H1 (cell line): ENCODE measurements at regions of chr1 and their contacts with region 1.

Region 1: DNA sequence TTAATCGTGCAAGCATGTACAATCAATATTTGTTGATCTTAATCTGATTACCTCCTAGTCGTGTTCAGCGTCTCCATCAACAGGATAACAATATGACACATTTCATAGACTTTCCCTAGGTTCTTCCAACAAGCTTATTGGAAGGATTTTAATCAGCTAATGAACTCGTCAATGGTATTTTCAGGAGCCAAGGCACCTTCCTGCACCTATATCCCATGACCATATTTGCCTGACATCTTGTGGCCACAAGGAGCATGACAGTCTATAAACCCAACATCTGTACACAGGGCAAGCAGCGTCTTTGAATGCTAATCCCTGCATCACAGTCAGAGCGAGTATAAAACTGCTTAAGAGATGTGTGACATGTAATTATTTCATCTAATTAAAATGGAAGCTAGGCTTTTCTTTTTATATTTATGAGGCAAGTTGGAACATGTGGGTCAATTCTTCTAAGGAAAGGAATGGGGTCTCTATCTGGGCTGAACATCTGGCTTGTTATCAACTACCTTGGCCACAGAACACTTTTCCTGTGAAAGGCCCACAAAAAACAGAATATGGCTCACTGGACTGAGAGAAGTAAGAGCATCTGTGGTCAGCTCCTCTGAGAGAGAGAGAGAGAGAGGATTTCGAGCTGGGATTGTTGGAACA is 388.8 kb downstream of the NTNG1 start:
- DNase-seq: no peak
- H3K4me3 ChIP-seq: no peak overlapping the region
- H3K27ac ChIP-seq: no peak overlapping the region
- H3K4me1 ChIP-seq: peaks cover 0 to 3% (median under 1%) of the 10 kb centered on the region in 4 experiments; a peak in 2 of 7 replicates
- H3K27me3 ChIP-seq: no peaks in the 10 kb centered on the region
- CTCF ChIP-seq: peak; percentile 43 to 89 (median 84)
- EP300 ChIP-seq: no peak
- POLR2A ChIP-seq: no peak
- RAD21 ChIP-seq: peak; percentile 94

Region 2: DNA sequence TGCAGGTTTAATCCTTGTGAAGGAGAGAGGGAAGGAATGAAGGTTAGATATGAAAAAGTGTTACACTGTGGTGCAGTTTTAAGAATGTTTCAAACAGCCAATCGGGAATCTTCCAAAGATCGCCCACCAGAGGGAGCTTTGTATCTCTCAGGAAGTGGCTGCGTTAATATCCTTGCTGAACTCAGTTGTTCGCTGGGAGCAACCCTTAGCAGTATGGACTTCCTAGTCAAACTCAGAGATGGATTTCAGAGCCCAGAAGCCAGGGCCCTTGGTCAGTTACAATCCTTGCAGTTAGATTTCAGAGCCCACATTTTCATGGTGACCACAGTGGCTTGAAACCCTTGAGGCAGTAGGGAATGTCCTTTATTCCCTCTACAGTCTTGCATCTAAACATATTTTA is 252.6 kb before region 1 on chr1:
- CTCF ChIA-PET with region 1: interaction called, 69 read pairs
- POLR2A ChIA-PET with region 1: no interaction called
- DNase-seq: peak; percentile 21 to 54
- H3K4me3 ChIP-seq: no peak overlapping the region
- H3K27ac ChIP-seq: no peak overlapping the region
- H3K4me1 ChIP-seq: no peaks in the 10 kb centered on the region; a peak in 1 of 7 replicates
- H3K27me3 ChIP-seq: no peaks in the 10 kb centered on the region
- CTCF ChIP-seq: peak in 2 of 3 experiments; percentile 64 to 77; a peak in 3 of 4 replicates
- EP300 ChIP-seq: no peak
- POLR2A ChIP-seq: no peak
- RAD21 ChIP-seq: peak; percentile 76 to 81

Region 3: GRCh38 chr1:107436552-107437241 is 92.9 kb before region 1 on chr1:
- CTCF ChIA-PET with region 1: interaction called, 14 read pairs
- POLR2A ChIA-PET with region 1: no interaction called
- DNase-seq: no peak
- H3K4me3 ChIP-seq: no peak overlapping the region
- H3K27ac ChIP-seq: no peak overlapping the region
- H3K4me1 ChIP-seq: peaks cover 0 to 6% (median 2%) of the 10 kb centered on the region in 4 experiments; a peak in 2 of 7 replicates
- H3K27me3 ChIP-seq: no peaks in the 10 kb centered on the region
- CTCF ChIP-seq: no peak
- EP300 ChIP-seq: no peak
- POLR2A ChIP-seq: no peak
- RAD21 ChIP-seq: no peak

Region 4: DNA sequence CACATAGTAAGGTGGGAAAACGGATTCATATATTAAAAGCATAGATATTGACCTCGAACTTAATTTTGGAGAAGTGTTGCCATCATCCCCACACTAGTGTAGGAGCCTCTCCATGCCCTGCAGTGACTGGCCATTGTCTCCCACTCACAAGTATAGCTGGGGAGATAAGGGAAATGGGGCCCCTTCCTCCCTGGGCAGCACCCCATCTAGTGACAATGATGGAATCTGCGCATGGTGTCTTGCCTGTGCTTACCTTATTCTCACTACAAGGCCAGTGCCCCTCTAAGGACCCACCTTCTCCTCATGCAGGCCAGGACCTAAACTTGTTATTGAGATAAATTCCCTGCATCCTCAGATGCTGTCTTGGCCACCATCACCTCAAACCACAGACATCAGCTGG is 13.9 kb before region 1 on chr1:
- CTCF ChIA-PET with region 1: interaction called, 64 read pairs
- POLR2A ChIA-PET with region 1: no interaction called
- DNase-seq: peak in 1 of 2 experiments; percentile 32
- H3K4me3 ChIP-seq: no peak overlapping the region
- H3K27ac ChIP-seq: no peak overlapping the region
- H3K4me1 ChIP-seq: no peaks in the 10 kb centered on the region
- H3K27me3 ChIP-seq: no peaks in the 10 kb centered on the region
- CTCF ChIP-seq: peak; percentile 8 to 25 (median 11); a peak in 3 of 4 replicates
- EP300 ChIP-seq: no peak
- POLR2A ChIP-seq: no peak
- RAD21 ChIP-seq: peak; percentile 20 to 25; a peak in 1 of 4 replicates

Region 5: DNA sequence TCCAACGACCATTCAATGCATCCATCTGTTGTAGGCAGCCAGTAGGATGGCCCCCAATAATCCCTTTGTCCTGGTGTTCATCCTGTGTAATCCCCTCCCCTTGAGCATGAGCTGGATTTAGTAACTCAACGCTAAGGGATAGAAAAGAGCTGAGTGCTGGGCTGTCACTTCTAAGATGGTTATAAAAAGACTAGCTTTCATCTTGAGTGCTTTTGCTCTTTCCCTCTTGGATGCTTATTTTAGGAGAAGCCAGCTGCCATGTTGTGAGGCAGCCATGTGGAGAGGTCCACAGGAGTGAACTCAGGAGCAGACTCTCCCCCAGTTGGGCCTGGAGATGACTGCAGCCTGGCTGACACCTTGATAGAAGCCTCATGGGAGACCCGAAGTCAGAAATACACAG is 33.8 kb after region 1 on chr1:
- CTCF ChIA-PET with region 1: interaction called, 15 read pairs
- POLR2A ChIA-PET with region 1: no interaction called
- DNase-seq: no peak
- H3K4me3 ChIP-seq: no peak overlapping the region
- H3K27ac ChIP-seq: no peak overlapping the region
- H3K4me1 ChIP-seq: no peaks in the 10 kb centered on the region
- H3K27me3 ChIP-seq: no peaks in the 10 kb centered on the region
- CTCF ChIP-seq: no peak
- EP300 ChIP-seq: no peak
- POLR2A ChIP-seq: no peak
- RAD21 ChIP-seq: no peak

Region 6: GRCh38 chr1:107683191-107683657 is 153.6 kb after region 1 on chr1:
- CTCF ChIA-PET with region 1: no interaction called
- POLR2A ChIA-PET with region 1: no interaction called
- DNase-seq: no peak
- H3K4me3 ChIP-seq: no peak overlapping the region
- H3K27ac ChIP-seq: no peak overlapping the region
- H3K4me1 ChIP-seq: peaks cover 0 to 3% (median 0%) of the 10 kb centered on the region in 4 experiments; a peak in 2 of 7 replicates
- H3K27me3 ChIP-seq: no peaks in the 10 kb centered on the region
- CTCF ChIP-seq: no peak
- EP300 ChIP-seq: no peak
- POLR2A ChIP-seq: no peak
- RAD21 ChIP-seq: no peak